ENCODE measurements at regions of chr5 and their contacts with region 1.

Region 1: GRCh38 chr5:69265931-69266330 is 31.2 kb downstream of the CDK7 start:
- DNase-seq: no peak
- ATAC-seq: peak; percentile 84
- H3K4me3 ChIP-seq: no peak overlapping the region
- H3K27ac ChIP-seq: no peak overlapping the region
- H3K4me1 ChIP-seq: no peaks in the 10 kb centered on the region
- H3K27me3 ChIP-seq: no peaks in the 10 kb centered on the region
- CTCF ChIP-seq: peak; percentile 74

Region 2: GRCh38 chr5:69252437-69252836 is 13.5 kb before region 1 on chr5:
- CTCF ChIA-PET with region 1: no interaction called
- POLR2A ChIA-PET with region 1: interaction called, 16 read pairs
- in situ Hi-C with region 1: no loop called
- intact Hi-C with region 1: no loop called
- DNase-seq: no peak
- ATAC-seq: no peak
- H3K4me3 ChIP-seq: no peak overlapping the region
- H3K27ac ChIP-seq: no peak overlapping the region
- H3K4me1 ChIP-seq: peaks cover 3% of the 10 kb centered on the region; the same call in 1 of the 2 replicates
- H3K27me3 ChIP-seq: no peaks in the 10 kb centered on the region
- CTCF ChIP-seq: no peak

Measured in Panc1 (cell line).